ENCODE measurements at regions of chr2 and their contacts with region 1.

Region 1: GRCh38 chr2:106582148-106583143 is 95.3 kb downstream of the CD8B2 start:
- DNase-seq: peak; percentile 85
- H3K4me3 Mint-ChIP-seq: peak overlapping the region; percentile 70
- H3K27ac Mint-ChIP-seq: no peak overlapping the region
- H3K4me1 Mint-ChIP-seq: peaks cover 7% of the 10 kb centered on the region
- H3K27me3 Mint-ChIP-seq: peaks cover 20% of the 10 kb centered on the region
- CTCF ChIP-seq: peak; percentile 73

Region 2: DNA sequence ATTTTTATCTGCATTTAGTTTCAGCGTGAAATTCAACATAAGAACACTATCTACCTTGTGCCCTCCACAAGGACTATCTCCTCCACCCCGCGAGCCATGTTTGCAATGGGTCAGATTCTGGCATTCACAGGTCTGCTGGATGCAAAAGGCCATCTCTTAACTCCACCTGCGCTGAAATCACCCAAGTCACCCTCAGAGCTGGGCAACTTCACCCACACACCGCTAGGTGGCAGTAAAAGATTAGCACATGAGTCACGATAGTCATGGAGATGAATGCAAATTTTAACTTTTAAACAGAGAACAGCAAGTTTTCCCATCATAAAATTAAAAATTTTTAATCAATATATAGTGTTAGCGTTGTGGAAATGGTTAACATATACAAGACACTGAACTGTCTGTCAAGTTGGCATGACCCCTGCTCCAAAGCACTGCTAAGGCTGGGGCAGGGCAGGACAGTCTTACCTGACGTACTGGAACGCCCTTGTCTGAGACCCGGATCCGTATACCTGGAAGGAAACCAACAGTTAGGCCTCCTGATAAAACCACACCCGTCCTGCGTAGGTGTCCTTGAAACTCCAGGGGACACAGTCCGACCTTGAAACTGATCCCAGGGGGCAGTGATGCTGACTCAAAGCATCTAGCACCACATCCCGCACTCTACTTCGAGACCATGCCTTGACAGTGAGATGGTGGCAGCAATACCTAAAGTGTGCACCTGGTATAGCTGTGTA is 477.9 kb before region 1 on chr2:
- CTCF ChIA-PET with region 1: interaction called, 15 read pairs
- POLR2A ChIA-PET with region 1: no interaction called
- intact Hi-C with region 1: loop called (anchors 2 kb)
- DNase-seq: peak; percentile 76
- H3K4me3 Mint-ChIP-seq: no peak overlapping the region
- H3K27ac Mint-ChIP-seq: no peak overlapping the region
- H3K4me1 Mint-ChIP-seq: no peaks in the 10 kb centered on the region
- H3K27me3 Mint-ChIP-seq: no peaks in the 10 kb centered on the region
- CTCF ChIP-seq: peak; percentile 91

Region 3: GRCh38 chr2:106537047-106537446 is 45.4 kb before region 1 on chr2:
- CTCF ChIA-PET with region 1: interaction called, 14 read pairs
- POLR2A ChIA-PET with region 1: no interaction called
- intact Hi-C with region 1: loop called (anchors 2 kb)
- DNase-seq: no peak
- H3K4me3 Mint-ChIP-seq: no peak overlapping the region
- H3K27ac Mint-ChIP-seq: no peak overlapping the region
- H3K4me1 Mint-ChIP-seq: no peaks in the 10 kb centered on the region
- H3K27me3 Mint-ChIP-seq: peaks cover 34% of the 10 kb centered on the region
- CTCF ChIP-seq: no peak

Region 4: GRCh38 chr2:106542811-106543259 is 39.6 kb before region 1 on chr2:
- CTCF ChIA-PET with region 1: interaction called, 14 read pairs
- POLR2A ChIA-PET with region 1: no interaction called
- intact Hi-C with region 1: loop called (anchors 2 kb)
- DNase-seq: peak; percentile 69
- H3K4me3 Mint-ChIP-seq: peak overlapping the region; percentile 54
- H3K27ac Mint-ChIP-seq: peak overlapping the region; percentile 11
- H3K4me1 Mint-ChIP-seq: peaks cover 5% of the 10 kb centered on the region
- H3K27me3 Mint-ChIP-seq: peaks cover 9% of the 10 kb centered on the region
- CTCF ChIP-seq: peak; percentile 94

Region 5: GRCh38 chr2:106566050-106566449 is 16.4 kb before region 1 on chr2:
- CTCF ChIA-PET with region 1: interaction called, 52 read pairs
- POLR2A ChIA-PET with region 1: interaction called, 4 read pairs
- intact Hi-C with region 1: no loop called
- DNase-seq: peak; percentile 6
- H3K4me3 Mint-ChIP-seq: no peak overlapping the region
- H3K27ac Mint-ChIP-seq: no peak overlapping the region
- H3K4me1 Mint-ChIP-seq: no peaks in the 10 kb centered on the region
- H3K27me3 Mint-ChIP-seq: peaks cover 12% of the 10 kb centered on the region
- CTCF ChIP-seq: no peak

Region 6: DNA sequence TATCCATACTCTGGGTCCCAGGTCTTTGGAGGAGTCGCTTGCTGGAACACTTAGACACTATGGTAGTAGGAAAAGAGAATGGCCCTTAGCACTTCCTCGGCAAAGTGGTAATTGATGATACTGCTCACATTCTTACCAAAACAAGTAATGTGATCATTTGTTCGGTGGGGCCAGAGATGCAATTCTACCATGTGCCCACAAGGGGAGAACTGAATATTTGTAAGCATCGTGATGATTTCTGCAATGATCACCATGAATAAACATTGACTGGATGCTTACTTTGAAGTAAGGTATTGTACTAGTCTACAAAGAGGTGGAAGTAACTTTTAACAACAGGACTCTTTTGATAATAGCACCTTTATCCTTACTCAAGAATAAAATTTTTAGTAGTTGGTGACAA is 14.4 kb after region 1 on chr2:
- CTCF ChIA-PET with region 1: interaction called, 21 read pairs
- POLR2A ChIA-PET with region 1: no interaction called
- intact Hi-C with region 1: no loop called
- DNase-seq: no peak
- H3K4me3 Mint-ChIP-seq: no peak overlapping the region
- H3K27ac Mint-ChIP-seq: no peak overlapping the region
- H3K4me1 Mint-ChIP-seq: no peaks in the 10 kb centered on the region
- H3K27me3 Mint-ChIP-seq: no peaks in the 10 kb centered on the region
- CTCF ChIP-seq: peak; percentile 23

Region 7: GRCh38 chr2:106685180-106685900 is 102.9 kb after region 1 on chr2:
- CTCF ChIA-PET with region 1: no interaction called
- POLR2A ChIA-PET with region 1: no interaction called
- intact Hi-C with region 1: no loop called
- DNase-seq: no peak
- H3K4me3 Mint-ChIP-seq: no peak overlapping the region
- H3K27ac Mint-ChIP-seq: no peak overlapping the region
- H3K4me1 Mint-ChIP-seq: peaks cover 5% of the 10 kb centered on the region
- H3K27me3 Mint-ChIP-seq: no peaks in the 10 kb centered on the region
- CTCF ChIP-seq: no peak

Region 8: GRCh38 chr2:106719222-106719621 is 136.8 kb after region 1 on chr2:
- CTCF ChIA-PET with region 1: no interaction called
- POLR2A ChIA-PET with region 1: no interaction called
- intact Hi-C with region 1: no loop called
- DNase-seq: no peak
- H3K4me3 Mint-ChIP-seq: no peak overlapping the region
- H3K27ac Mint-ChIP-seq: no peak overlapping the region
- H3K4me1 Mint-ChIP-seq: no peaks in the 10 kb centered on the region
- H3K27me3 Mint-ChIP-seq: peaks cover 10% of the 10 kb centered on the region
- CTCF ChIP-seq: no peak